Activated CD8-positive, alpha-beta memory T cell treated with anti-CD3 and anti-CD28 coated beads, Interleukin-2, amount 10 ng/mL, durations not matched to agents 7 days and 5 days (primary cell): ENCODE measurements at regions of chr12 and their contacts with region 1.

Region 1: GRCh38 chr12:75814851-75815754 is 216.5 kb downstream of the PHLDA1 start:
- DNase-seq: no peak
- ATAC-seq: peak; percentile 50
- H3K4me3 Mint-ChIP-seq: no peak overlapping the region
- H3K27ac Mint-ChIP-seq: peak overlapping the region; percentile 2
- H3K4me1 Mint-ChIP-seq: peaks cover 48% of the 10 kb centered on the region
- H3K27me3 Mint-ChIP-seq: no peaks in the 10 kb centered on the region

Region 2: DNA sequence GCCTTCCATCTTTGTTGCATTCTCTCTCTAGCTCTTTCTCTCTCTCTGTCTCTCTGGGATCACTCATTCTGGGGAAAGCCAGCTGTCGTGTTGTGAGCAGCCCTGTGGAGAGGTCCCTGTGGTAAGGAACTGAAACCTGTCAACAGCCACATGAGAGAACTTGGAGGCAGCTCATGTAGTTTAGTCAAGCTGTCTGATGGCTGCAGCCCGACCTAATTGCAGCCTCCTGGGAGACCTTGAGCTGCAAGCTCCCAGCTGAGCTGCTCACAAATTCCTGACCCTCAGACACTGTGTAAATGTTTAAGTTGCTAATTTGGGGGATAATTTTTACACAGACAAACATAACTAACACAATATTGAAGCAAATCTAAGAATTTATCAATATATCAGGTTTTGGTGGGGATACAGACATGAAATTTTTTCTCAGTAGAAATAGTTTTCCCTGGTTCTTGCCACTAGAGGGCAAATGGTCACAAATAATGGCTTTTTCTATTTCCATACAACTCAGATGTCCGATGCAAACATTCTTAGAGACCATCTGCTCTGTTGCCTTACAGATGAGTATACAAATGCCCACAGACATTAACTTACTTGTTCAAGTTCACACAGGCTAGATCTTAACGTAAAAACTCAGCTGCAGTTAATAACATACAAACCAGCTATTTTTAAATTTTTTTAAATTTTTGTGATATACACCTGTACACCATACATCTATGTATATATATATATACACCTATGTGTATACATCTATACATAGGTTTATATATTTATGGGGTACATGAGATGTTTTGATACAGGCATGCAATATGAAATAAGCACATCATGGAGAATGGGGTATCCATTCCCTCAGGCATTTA is 288.2 kb before region 1 on chr12:
- CTCF ChIA-PET with region 1: interaction called, 15 read pairs
- DNase-seq: peak; percentile 58
- ATAC-seq: peak; percentile 76
- H3K4me3 Mint-ChIP-seq: no peak overlapping the region
- H3K27ac Mint-ChIP-seq: peak overlapping the region; percentile 54
- H3K4me1 Mint-ChIP-seq: peaks cover 10% of the 10 kb centered on the region
- H3K27me3 Mint-ChIP-seq: peaks cover 22% of the 10 kb centered on the region

Region 3: DNA sequence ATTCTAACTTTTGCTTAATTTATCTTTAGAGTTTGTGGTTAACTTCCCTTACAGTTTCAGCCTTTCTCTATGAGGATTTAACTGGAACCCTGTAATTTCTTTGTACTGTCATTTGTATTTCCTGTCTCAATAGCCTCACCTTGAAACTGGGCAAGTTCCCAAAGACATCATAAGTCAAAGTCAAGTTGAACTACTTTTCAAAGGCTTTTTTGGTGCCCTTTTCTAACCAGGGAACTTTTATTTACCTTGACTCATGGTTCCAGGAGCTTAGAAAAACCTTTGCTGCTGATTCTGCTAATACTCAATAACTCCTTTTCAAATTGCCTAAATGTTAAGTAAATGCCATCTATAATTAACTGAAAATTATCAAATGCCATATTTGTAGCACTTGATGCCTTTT is 102.9 kb before region 1 on chr12:
- CTCF ChIA-PET with region 1: no interaction called
- DNase-seq: no peak
- ATAC-seq: no peak
- H3K4me3 Mint-ChIP-seq: no peak overlapping the region
- H3K27ac Mint-ChIP-seq: no peak overlapping the region
- H3K4me1 Mint-ChIP-seq: peaks cover 18% of the 10 kb centered on the region
- H3K27me3 Mint-ChIP-seq: peaks cover 8% of the 10 kb centered on the region

Region 4: DNA sequence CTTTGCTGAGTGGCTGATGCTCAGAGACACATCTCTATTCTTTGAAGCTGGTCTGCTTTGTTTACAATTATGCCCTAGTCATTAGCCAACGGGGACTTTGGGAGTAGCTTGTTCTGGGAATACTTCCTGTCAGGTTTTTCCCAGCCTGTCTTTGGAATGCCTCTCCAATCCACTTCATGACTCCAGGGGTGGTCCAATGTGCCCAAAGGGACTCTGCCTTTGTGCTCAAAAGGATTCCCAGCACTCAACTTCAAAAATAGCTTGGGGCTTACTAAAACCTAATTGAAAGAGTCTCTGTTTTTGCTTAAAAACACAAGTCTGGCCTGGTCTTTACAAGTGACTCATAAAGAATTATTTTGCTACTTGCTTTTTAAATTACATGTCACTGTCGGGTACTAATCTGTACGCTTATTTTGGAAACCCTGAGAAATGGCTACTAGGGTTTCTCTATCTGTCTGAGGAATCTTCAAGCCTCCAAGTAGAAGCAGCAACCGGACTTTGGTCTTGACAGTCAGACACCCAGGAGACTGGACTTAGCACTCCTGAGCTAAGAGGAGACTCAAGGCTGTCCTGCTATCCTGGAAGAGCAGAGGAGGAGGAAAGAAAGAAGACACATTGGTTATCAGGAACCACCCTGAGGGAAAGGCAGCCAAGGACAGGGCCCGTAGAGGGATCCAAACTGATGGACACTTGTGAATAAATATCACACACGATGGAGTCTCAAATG is 195.8 kb after region 1 on chr12:
- CTCF ChIA-PET with region 1: no interaction called
- DNase-seq: no peak
- ATAC-seq: no peak
- H3K4me3 Mint-ChIP-seq: no peak overlapping the region
- H3K27ac Mint-ChIP-seq: no peak overlapping the region
- H3K4me1 Mint-ChIP-seq: peaks cover 13% of the 10 kb centered on the region
- H3K27me3 Mint-ChIP-seq: no peaks in the 10 kb centered on the region